ENCODE measurements at regions of chr22 and their contacts with region 1.

Region 1: GRCh38 chr22:23012081-23012622 is 58.2 kb upstream of the GNAZ start:
- DNase-seq: no peak
- ATAC-seq: no peak

Region 2: GRCh38 chr22:23098718-23099530 is 86.8 kb after region 1 on chr22:
- intact Hi-C with region 1: loop called (anchors 10 kb)
- DNase-seq: peak; percentile 73
- ATAC-seq: peak; percentile 96

Measured in Right ventricle myocardium superior (tissue), 1 donor.